Right cardiac atrium (tissue), 5 donors: ENCODE measurements at regions of chr13 and their contacts with region 1.

Region 1: DNA sequence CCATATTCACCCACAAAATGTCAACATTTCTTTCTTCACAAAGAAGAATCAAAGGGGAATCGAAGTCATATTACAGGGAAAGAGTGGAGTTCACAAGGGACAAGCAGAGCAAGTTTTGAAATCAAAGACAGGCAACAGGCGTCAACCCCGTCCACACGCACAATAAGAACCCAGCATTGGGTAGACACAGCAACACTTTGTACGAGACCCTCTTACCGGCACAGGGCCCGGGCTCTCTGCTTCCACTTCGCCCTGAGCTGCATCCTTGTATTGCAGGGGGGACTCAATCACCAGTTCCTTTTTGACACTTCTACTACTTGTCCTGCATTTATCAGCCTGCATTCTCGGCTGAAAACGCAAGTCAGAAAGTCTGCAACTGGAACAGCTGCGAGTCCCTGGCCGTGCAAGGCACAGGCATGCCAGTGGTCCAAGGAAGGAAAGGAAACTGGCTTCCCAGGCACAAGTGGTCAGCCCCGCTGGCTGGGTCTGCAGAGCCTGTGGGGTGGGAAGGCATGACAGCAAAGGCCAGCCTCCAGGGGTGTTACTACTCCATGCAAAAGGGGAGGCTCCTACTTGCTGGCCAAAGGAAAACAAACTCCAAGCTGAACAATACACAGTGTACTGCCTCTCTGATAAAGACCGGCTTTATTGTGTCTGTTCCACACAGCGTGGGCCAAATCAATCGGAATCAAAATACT is at the start of gene DOCK9:
- DNase-seq: peak; percentile 79 to 92 (median 89)
- ATAC-seq: peak; percentile 98
- H3K4me3 ChIP-seq: peak within 1 kb of the TSS; percentile 53
- H3K27ac ChIP-seq: peak within 1 kb of the TSS; percentile 78
- H3K4me1 ChIP-seq: peaks cover 6% of the 10 kb centered on the region
- H3K27me3 ChIP-seq: no peaks in the 10 kb centered on the region
- total RNA-seq, gene DOCK9: 39.4 to 59.7 (median 57.2) TPM

Region 2: GRCh38 chr13:98910501-98910951 is 67.2 kb before region 1 on chr13:
- intact Hi-C with region 1: loop called in 1 of 4 experiments (anchors 10 kb)
- DNase-seq: peak in 1 of 3 donors; percentile 31
- ATAC-seq: peak; percentile 91 to 95
- H3K4me3 ChIP-seq: no peak overlapping the region
- H3K27ac ChIP-seq: peak overlapping the region; percentile 33
- H3K4me1 ChIP-seq: peaks cover 7% of the 10 kb centered on the region
- H3K27me3 ChIP-seq: no peaks in the 10 kb centered on the region